Esophagus muscularis mucosa (tissue), 4 donors: ENCODE measurements at regions of chr10 and their contacts with region 1.

Region 1: DNA sequence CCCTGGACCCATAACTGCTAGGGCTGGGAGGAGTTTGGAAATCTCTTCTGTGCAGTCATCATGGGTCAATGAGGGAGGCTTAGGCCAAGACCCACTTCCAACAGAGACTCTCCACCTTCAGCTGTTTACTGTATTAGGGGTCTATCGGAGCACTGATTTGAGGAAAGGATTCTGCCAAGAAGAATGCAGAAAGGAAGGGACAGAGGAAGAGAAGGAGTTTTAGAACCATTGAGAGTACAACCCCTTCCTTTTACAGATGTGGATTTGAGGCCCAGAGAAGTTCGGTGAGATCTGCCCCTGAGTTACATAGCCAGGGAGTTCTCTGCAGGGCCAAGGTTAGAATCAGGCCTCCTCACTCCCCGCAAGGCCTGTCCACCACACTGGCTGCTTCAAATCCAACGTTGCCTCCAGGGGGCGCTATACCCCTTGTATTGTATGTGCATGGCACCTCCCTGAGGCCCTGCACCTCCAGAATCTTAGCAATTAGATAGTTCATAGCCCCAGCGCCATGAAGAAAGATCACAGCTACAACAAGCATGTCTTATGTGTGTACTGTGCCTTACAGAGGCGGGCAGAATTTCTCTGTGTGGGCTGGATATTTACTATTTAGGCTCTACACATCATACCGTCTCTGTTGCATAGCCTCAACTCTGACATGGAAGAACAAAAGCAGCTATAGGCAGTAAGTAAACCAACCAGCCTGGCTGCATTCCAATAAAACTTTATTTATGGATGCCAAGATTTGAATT is 246.8 kb downstream of the SKIDA1 start:
- DNase-seq: peak; percentile 95
- H3K4me3 ChIP-seq: no peak overlapping the region
- H3K27ac ChIP-seq: no peak overlapping the region
- H3K4me1 ChIP-seq: peaks cover 3 to 7% (median 6%) of the 10 kb centered on the region in 4 donors
- H3K27me3 ChIP-seq: no peaks in the 10 kb centered on the region
- CTCF ChIP-seq: peak; percentile 67 to 79 (median 75)
- EP300 ChIP-seq: no peak
- POLR2A ChIP-seq: no peak

Region 2: DNA sequence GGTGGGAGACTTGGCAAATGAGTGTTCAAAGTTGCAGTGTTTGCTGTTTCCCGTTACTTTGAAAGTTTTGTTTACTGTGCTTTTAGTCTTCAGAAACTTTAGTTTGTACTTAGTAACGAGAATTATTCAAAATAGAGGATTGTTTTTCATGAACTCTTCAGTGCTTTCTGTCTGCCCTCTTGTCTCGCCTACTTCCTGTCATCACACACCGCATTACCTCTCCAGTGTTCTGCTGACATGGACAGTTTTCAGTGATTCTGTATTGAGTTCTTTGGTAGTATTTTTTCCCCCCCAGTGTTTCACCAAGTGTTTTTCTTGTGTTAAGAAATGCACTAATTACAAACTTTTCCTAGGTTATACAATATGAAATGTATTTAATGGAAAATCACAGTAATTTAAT is 462.3 kb after region 1 on chr10:
- intact Hi-C with region 1: loop called (anchors 5 kb)
- DNase-seq: no peak
- H3K4me3 ChIP-seq: no peak overlapping the region
- H3K27ac ChIP-seq: no peak overlapping the region
- H3K4me1 ChIP-seq: no peaks in the 10 kb centered on the region
- H3K27me3 ChIP-seq: no peaks in the 10 kb centered on the region
- CTCF ChIP-seq: no peak
- EP300 ChIP-seq: no peak
- POLR2A ChIP-seq: no peak

Region 3: DNA sequence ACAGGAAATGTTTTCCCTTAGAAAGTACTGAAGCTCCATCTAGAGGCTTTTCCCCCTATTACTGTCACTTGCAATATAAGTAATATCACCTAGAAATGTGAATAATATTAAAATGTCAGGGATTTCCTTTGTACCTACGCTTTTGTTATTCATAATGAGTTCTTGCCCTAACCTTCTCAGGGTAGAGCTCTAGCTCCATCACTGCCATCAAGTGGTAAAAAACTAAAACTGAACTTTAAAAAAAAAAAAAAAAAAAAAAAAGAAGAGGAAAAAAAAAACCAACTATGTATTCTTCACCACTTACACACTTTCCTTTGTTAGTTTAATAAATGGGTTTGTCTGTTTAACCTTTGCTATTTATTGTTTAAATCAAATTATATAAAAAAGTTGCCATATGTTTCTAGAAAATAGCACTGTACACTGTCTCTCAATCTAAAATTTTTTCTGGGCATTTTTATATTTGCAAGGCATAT is 675.0 kb after region 1 on chr10:
- intact Hi-C with region 1: loop called (anchors 5 kb)
- DNase-seq: no peak
- H3K4me3 ChIP-seq: no peak overlapping the region
- H3K27ac ChIP-seq: no peak overlapping the region
- H3K4me1 ChIP-seq: peaks cover 0 to 17% (median 6%) of the 10 kb centered on the region in 4 donors
- H3K27me3 ChIP-seq: no peaks in the 10 kb centered on the region
- CTCF ChIP-seq: peak; percentile 16 to 35 (median 28)
- EP300 ChIP-seq: no peak
- POLR2A ChIP-seq: no peak